ENCODE measurements at regions of chr4 and their contacts with region 1.

Region 1: DNA sequence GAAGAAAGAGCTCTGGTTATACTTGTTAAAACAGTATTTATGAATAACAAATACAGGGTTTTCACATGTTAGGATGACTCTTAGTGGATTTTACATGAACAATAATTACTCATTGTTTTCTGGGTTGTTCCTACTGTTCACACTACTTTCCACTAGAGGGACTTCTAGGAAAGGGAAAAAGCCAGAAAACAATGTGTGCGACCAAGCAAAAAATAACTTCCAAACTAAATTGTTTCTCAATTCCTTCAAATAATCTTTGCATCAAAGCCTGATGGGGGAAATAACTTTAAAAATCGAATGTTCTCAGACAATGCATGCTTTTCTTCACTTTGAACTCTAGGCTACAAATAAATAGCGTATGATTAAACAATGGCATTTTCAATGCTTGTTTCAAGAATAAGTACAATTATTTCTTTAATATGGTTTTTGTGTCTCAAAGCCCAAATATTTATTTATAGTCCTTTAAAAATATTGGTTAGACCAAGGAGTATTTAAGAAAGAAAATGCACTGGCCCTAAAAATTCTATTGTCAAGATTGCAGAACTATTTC is 72.1 kb upstream of the ETNPPL start:
- DNase-seq: peak; percentile 75
- H3K4me3 ChIP-seq: no peak overlapping the region
- H3K27ac ChIP-seq: no peak overlapping the region
- H3K4me1 ChIP-seq: peaks cover 51% of the 10 kb centered on the region
- H3K27me3 ChIP-seq: no peaks in the 10 kb centered on the region
- CTCF ChIP-seq: peak; percentile 79

Region 2: GRCh38 chr4:108425988-108426387 is 408.9 kb before region 1 on chr4:
- CTCF ChIA-PET with region 1: no interaction called
- POLR2A ChIA-PET with region 1: no interaction called
- intact Hi-C with region 1: no loop called
- DNase-seq: no peak
- H3K4me3 ChIP-seq: no peak overlapping the region
- H3K27ac ChIP-seq: no peak overlapping the region
- H3K4me1 ChIP-seq: no peaks in the 10 kb centered on the region
- H3K27me3 ChIP-seq: no peaks in the 10 kb centered on the region
- CTCF ChIP-seq: no peak

Region 3: GRCh38 chr4:108683479-108683878 is 151.4 kb before region 1 on chr4:
- CTCF ChIA-PET with region 1: no interaction called
- POLR2A ChIA-PET with region 1: no interaction called
- intact Hi-C with region 1: loop called (anchors 5 kb)
- DNase-seq: peak; percentile 74
- H3K4me3 ChIP-seq: no peak overlapping the region
- H3K27ac ChIP-seq: no peak overlapping the region
- H3K4me1 ChIP-seq: peaks cover 10% of the 10 kb centered on the region
- H3K27me3 ChIP-seq: no peaks in the 10 kb centered on the region
- CTCF ChIP-seq: peak; percentile 65

Region 4: GRCh38 chr4:108940149-108940548 is 105.2 kb after region 1 on chr4:
- CTCF ChIA-PET with region 1: no interaction called
- POLR2A ChIA-PET with region 1: interaction called, 6 read pairs
- intact Hi-C with region 1: loop called (anchors 5 kb)
- DNase-seq: no peak
- H3K4me3 ChIP-seq: no peak overlapping the region
- H3K27ac ChIP-seq: no peak overlapping the region
- H3K4me1 ChIP-seq: peaks cover 23% of the 10 kb centered on the region
- H3K27me3 ChIP-seq: no peaks in the 10 kb centered on the region
- CTCF ChIP-seq: no peak

Region 5: DNA sequence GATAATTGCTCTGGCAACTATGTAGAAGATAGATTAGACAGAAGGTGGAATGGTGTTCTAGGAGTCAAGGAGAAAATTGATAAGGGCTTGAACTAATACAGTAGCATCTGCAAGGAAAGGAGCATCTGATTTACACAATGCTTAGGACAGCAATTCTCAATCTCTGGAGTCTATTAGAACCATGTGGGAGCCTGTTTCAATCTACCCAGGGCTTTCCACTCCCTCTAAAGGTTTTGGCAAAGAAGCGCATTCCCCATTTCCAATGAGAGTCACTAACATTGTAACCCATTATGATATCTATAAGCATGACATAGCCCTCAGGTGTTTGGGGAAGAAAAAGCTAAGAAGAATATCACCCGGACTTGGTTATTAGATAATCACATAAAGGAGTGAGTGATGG is 299.4 kb after region 1 on chr4:
- CTCF ChIA-PET with region 1: no interaction called
- POLR2A ChIA-PET with region 1: no interaction called
- intact Hi-C with region 1: loop called (anchors 10 kb)
- DNase-seq: peak; percentile 52
- H3K4me3 ChIP-seq: no peak overlapping the region
- H3K27ac ChIP-seq: no peak overlapping the region
- H3K4me1 ChIP-seq: peaks cover 22% of the 10 kb centered on the region
- H3K27me3 ChIP-seq: no peaks in the 10 kb centered on the region
- CTCF ChIP-seq: peak; percentile 29; the same call in 1 of the 2 replicates

Region 6: DNA sequence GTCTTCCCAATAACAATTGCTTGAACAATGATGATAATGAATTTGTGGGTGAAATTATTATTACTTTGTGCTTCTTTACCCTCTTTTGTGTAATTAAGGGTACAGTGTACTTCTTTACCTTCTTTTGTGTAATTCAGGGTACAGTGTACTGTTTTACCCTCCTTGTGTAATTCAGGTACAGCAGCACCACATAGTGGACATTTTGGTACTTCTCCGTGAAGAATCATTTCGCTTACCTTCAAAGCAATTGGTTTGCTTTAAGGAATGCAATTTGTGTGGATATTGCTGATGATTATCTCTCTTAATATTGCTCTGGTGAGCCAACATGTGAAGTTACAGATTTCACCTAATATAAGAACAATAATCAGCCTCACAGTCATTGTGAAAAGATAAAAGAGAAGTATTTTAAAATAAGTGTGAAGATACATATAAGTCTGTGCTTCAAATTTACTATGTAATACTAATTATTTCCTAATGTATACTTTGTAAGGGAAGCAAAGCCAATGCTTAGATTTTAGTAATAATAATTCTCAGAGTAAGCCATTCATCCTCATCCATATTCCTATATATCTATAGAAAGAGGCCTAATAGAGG is 571.5 kb after region 1 on chr4:
- CTCF ChIA-PET with region 1: interaction called, 4 read pairs
- POLR2A ChIA-PET with region 1: no interaction called
- intact Hi-C with region 1: loop called (anchors 5 kb)
- DNase-seq: peak; percentile 80
- H3K4me3 ChIP-seq: no peak overlapping the region
- H3K27ac ChIP-seq: no peak overlapping the region
- H3K4me1 ChIP-seq: peaks cover 9% of the 10 kb centered on the region
- H3K27me3 ChIP-seq: no peaks in the 10 kb centered on the region
- CTCF ChIP-seq: peak; percentile 83

Measured in A673 (cell line).